T-cell (primary cell): ENCODE measurements at regions of chr11 and their contacts with region 1.

Region 1: DNA sequence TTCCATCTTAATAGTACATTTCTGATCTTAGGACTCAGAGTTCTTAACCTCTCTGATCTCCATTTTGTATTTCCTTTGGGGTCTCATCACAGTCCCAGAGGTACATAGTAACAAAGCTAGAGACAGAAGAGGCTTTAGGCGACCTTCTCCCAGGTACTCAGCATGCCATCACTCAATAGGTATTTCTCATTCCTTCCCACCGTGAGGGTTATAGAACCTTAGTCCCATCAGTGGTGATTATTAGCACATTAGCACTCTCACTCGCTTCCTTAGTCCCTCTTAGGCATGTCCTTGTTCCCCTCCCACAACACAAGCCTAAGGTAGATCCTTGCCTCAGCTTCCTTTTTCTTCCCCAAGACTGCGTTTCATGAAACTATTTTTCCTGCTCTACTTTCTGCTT is 14.7 kb downstream of the SWAP70 start:
- DNase-seq: no peak
- ATAC-seq: no peak
- H3K4me3 ChIP-seq: no peak overlapping the region
- H3K4me3 Mint-ChIP-seq: no peak overlapping the region
- H3K27ac ChIP-seq: no peak overlapping the region
- H3K27ac Mint-ChIP-seq: no peak overlapping the region
- H3K4me1 ChIP-seq: no peaks in the 10 kb centered on the region
- H3K4me1 Mint-ChIP-seq: peaks cover 0 to 8% (median 2%) of the 10 kb centered on the region in 3 donors
- H3K27me3 ChIP-seq: no peaks in the 10 kb centered on the region
- H3K27me3 Mint-ChIP-seq: no peaks in the 10 kb centered on the region

Region 2: GRCh38 chr11:9651899-9652748 is 26.5 kb before region 1 on chr11:
- CTCF ChIA-PET with region 1: no interaction called
- POLR2A ChIA-PET with region 1: interaction called in 1 of 2 experiments, 19 read pairs
- DNase-seq: peak in 3 of 35 experiments; percentile 4 to 24 (median 6)
- ATAC-seq: no peak
- H3K4me3 ChIP-seq: no peak overlapping the region
- H3K4me3 Mint-ChIP-seq: no peak overlapping the region
- H3K27ac ChIP-seq: no peak overlapping the region
- H3K27ac Mint-ChIP-seq: no peak overlapping the region
- H3K4me1 ChIP-seq: no peaks in the 10 kb centered on the region
- H3K4me1 Mint-ChIP-seq: no peaks in the 10 kb centered on the region
- H3K27me3 ChIP-seq: peaks cover 0 to 6% of the 10 kb centered on the region in 2 experiments
- H3K27me3 Mint-ChIP-seq: peaks cover 5 to 8% of the 10 kb centered on the region in 2 donors